WTC11 (cell line): ENCODE measurements at regions of chr10 and their contacts with region 1.

Region 1: DNA sequence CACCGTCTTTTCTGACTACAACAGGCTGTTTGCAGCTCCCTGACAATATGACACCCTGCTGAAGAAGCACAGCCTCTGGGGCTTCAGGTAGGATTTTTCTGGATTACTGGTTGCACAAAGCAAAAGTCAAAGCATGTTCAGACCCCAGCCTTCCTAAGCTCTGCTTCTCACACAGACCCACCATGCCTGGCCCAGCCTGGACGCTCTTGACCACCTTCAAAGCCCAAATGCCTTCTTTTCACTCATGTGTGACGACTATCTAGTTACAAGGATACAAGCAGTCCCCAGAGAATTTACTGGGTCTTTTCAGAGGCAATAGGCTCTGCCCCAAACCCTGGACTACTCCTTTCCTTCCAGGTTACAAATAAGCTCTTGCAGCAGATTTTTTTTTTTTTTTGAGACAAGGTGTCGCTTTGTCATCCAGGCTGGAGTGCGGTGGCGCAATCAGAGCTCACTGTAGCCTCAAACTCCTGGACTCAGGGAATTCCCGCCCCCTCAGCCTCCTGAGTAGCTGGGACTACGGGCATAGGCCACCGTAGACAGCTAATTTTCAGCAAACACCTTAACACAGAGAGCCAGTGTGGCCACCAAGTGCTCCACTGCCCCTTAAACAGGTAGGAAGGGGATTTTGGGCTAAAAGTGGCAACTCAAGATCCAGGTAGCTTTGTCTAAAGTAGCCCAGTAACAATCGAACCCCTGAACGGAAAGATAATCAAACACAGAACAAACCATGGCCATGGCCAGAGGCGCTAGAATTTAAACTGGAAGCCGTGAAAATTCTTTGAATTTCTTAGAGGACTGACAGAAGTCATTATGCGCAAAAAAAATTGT is 16.2 kb downstream of the SVIL start:
- DNase-seq: no peak
- ATAC-seq: peak; percentile 55
- H3K4me3 Mint-ChIP-seq: no peak overlapping the region
- H3K27ac Mint-ChIP-seq: peak overlapping the region; percentile 67
- H3K4me1 Mint-ChIP-seq: peaks cover 46% of the 10 kb centered on the region
- H3K27me3 Mint-ChIP-seq: no peaks in the 10 kb centered on the region
- CTCF ChIP-seq: no peak

Region 2: GRCh38 chr10:29555746-29556481 is 62.6 kb before region 1 on chr10:
- CTCF ChIA-PET with region 1: no interaction called
- POLR2A ChIA-PET with region 1: no interaction called
- DNase-seq: no peak
- ATAC-seq: peak; percentile 40; the same call in 1 of the 2 replicates
- H3K4me3 Mint-ChIP-seq: no peak overlapping the region
- H3K27ac Mint-ChIP-seq: peak overlapping the region; percentile 69
- H3K4me1 Mint-ChIP-seq: peaks cover 25% of the 10 kb centered on the region
- H3K27me3 Mint-ChIP-seq: no peaks in the 10 kb centered on the region
- CTCF ChIP-seq: no peak

Region 3: DNA sequence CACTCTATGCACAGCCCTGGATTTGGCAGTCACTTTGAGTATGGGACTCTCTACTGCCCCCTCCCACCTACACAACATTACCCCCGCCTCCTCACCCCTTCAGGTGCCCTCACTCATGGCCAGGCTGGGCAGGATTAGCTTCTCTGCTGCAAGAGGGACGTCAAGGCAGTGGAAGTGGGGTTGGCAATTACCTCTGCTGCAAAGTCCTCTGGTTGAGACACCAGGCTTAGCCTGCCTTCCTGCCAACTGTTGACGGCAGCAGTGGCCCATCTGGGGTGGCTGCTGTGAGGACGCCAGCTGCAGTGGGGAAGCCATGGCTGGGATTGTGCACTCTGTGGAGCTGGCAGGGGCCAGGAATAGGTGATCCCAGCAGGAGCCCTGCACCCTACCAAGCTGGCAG is 10.5 kb before region 1 on chr10:
- CTCF ChIA-PET with region 1: interaction called, 12 read pairs
- POLR2A ChIA-PET with region 1: interaction called, 3 read pairs
- DNase-seq: no peak
- ATAC-seq: peak; percentile 80
- H3K4me3 Mint-ChIP-seq: no peak overlapping the region
- H3K27ac Mint-ChIP-seq: no peak overlapping the region
- H3K4me1 Mint-ChIP-seq: peaks cover 20% of the 10 kb centered on the region
- H3K27me3 Mint-ChIP-seq: no peaks in the 10 kb centered on the region
- CTCF ChIP-seq: no peak